IMR-90 (cell line): ENCODE measurements at regions of chr4 and their contacts with region 1.

Region 1: DNA sequence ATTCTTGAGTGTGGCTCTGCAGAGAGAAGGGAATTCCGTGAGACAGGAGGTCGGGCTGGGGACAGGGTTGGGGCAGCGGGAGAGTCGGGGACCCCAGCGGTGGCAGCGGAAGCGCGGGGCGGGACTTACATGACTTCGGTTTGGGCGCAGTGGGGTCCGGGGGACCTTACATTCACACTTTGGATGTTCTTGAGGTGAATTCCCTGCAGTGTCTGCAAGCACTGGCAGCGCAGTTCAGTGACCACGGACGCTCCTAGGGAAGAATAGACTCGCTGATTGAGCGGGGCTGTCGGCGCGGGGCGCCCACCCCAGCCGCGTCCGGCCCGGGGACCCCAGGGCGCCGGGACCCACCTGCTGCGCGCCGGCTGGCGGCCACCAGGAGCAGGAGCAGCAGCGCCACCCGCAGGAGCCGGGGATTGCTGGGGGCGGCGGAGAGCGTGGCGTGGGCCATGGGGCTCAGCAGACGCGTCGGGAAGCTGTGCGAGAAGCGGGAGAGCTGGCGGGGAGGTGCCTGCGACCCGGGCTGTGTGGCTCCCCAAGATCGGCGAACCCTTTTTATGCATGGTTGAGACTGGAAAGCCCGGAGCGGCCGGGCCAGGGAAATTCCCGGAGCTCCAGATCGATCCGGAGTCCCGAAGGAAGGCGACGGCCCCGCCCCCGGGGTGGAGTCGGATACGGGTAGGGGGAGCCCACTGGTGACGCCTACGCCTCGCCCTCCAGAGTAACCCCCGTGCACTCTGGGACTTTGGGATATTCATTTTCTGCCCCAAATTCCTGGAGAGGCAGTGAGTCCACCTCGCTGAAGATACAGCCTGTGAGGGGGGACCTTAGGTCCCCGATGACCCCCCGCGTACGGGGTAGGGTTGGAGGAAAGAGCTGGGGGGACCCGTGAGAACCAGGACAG is at the start of gene CXCL3:
- DNase-seq: peak; percentile 40
- ATAC-seq: peak; percentile 97
- H3K4me3 ChIP-seq: peak within 1 kb of the TSS; percentile 84
- H3K27ac ChIP-seq: peak within 1 kb of the TSS; percentile 53
- H3K4me1 ChIP-seq: peaks cover 2% of the 10 kb centered on the region; the same call in 1 of the 2 replicates
- H3K27me3 ChIP-seq: no peaks in the 10 kb centered on the region
- CTCF ChIP-seq: peak; percentile 48
- POLR2A ChIP-seq: 0 out of 2 replicates have a peak, but pooled peaks have one; percentile 20
- RAD21 ChIP-seq: peak; percentile 31
- total RNA-seq, gene CXCL3: 0.18 TPM in 1 of 2 replicates, not detected in the other

Region 2: DNA sequence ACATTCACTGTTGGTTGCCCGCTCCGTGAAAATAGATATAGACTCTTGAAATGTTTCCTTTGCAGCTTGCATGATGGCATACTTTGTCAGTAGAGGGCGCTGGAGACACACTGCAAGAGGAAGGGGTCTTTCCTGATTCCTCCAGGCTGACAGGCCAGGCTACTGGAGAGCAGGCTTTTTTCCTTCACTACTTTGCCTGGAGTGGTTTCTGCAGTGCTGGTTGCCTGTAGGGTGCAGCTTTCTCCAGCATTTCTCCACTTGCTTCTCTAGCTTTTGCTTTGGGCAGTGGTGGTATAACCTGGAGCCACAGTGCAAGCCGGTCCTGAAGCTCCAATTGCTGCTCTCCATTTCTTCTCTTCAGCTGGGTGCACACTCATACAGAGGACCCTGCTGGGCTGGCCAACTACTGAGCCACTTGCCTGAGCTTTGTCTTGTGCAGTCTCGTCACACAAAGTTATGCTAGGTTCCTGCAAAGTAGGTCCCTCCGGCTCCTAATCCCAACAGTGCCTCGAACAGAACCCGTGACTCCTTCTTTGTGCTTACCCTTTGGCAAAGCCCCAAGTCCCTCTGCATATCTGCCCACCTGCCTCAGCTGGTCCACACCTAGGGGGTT is 464.5 kb before region 1 on chr4:
- CTCF ChIA-PET with region 1: no interaction called
- POLR2A ChIA-PET with region 1: no interaction called
- dilution Hi-C with region 1: no loop called
- in situ Hi-C with region 1: no loop called
- intact Hi-C with region 1: loop called (anchors 10 kb)
- DNase-seq: peak; percentile 82
- ATAC-seq: peak; percentile 98
- H3K4me3 ChIP-seq: no peak overlapping the region
- H3K27ac ChIP-seq: no peak overlapping the region
- H3K4me1 ChIP-seq: no peaks in the 10 kb centered on the region
- H3K27me3 ChIP-seq: peaks cover 2% of the 10 kb centered on the region; the same call in 1 of the 2 replicates
- CTCF ChIP-seq: peak; percentile 88
- POLR2A ChIP-seq: no peak
- RAD21 ChIP-seq: peak; percentile 80

Region 3: GRCh38 chr4:73662709-73663546 is 375.5 kb before region 1 on chr4:
- CTCF ChIA-PET with region 1: interaction called, 3 read pairs
- POLR2A ChIA-PET with region 1: no interaction called
- dilution Hi-C with region 1: no loop called
- in situ Hi-C with region 1: loop called (anchors 10 kb)
- intact Hi-C with region 1: loop called (anchors 1 kb)
- DNase-seq: peak; percentile 77
- ATAC-seq: peak; percentile 64
- H3K4me3 ChIP-seq: no peak overlapping the region
- H3K27ac ChIP-seq: no peak overlapping the region; the same call in 1 of the 2 replicates
- H3K4me1 ChIP-seq: peaks cover 6% of the 10 kb centered on the region
- H3K27me3 ChIP-seq: no peaks in the 10 kb centered on the region
- CTCF ChIP-seq: peak; percentile 72
- POLR2A ChIP-seq: no peak
- RAD21 ChIP-seq: peak; percentile 87

Region 4: DNA sequence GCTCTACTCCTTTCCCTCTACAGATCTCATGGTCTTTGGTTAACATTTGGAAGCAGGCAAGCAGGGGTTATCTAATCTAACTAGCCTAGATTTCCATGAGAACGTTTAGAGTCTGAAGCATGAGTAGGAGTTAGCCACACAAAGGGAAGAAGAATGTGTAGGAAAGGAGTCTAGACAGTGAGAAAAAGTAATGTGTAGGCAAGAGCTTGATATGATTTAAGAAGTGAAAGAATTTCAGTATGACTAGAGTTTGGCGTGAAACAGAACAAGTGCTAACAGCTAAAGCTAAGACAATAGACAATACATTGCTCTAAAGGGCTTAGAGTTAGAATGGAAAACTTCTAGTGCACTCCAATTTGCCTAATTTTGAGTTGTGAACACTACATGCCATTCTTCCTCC is 287.2 kb before region 1 on chr4:
- CTCF ChIA-PET with region 1: no interaction called
- POLR2A ChIA-PET with region 1: no interaction called
- dilution Hi-C with region 1: no loop called
- in situ Hi-C with region 1: no loop called
- intact Hi-C with region 1: no loop called
- DNase-seq: no peak
- ATAC-seq: no peak
- H3K4me3 ChIP-seq: no peak overlapping the region
- H3K27ac ChIP-seq: no peak overlapping the region
- H3K4me1 ChIP-seq: no peaks in the 10 kb centered on the region
- H3K27me3 ChIP-seq: no peaks in the 10 kb centered on the region; the same call in 1 of the 2 replicates
- CTCF ChIP-seq: no peak
- POLR2A ChIP-seq: no peak
- RAD21 ChIP-seq: no peak

Region 5: DNA sequence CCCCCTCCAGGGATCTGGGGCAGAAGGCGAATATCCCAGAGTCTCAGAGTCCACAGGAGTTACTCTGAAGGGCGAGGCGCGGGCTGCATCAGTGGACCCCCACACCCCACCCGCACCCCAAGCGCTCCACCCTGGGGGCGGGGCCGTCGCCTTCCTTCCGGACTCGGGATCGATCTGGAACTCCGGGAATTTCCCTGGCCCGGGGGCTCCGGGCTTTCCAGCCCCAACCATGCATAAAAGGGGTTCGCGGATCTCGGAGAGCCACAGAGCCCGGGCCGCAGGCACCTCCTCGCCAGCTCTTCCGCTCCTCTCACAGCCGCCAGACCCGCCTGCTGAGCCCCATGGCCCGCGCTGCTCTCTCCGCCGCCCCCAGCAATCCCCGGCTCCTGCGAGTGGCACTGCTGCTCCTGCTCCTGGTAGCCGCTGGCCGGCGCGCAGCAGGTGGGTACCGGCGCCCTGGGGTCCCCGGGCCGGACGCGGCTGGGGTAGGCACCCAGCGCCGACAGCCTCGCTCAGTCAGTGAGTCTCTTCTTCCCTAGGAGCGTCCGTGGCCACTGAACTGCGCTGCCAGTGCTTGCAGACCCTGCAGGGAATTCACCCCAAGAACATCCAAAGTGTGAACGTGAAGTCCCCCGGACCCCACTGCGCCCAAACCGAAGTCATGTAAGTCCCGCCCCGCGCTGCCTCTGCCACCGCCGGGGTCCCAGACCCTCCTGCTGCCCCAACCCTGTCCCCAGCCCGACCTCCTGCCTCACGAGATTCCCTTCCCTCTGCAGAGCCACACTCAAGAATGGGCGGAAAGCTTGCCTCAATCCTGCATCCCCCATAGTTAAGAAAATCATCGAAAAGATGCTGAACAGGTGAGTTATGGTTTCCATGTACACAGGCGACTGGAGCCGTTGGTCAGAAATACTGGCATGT is 169.0 kb before region 1 on chr4 and contains the start of gene CXCL1:
- CTCF ChIA-PET with region 1: no interaction called
- POLR2A ChIA-PET with region 1: no interaction called
- dilution Hi-C with region 1: no loop called
- in situ Hi-C with region 1: no loop called
- intact Hi-C with region 1: loop called (anchors 10 kb)
- DNase-seq: no peak
- ATAC-seq: peak; percentile 87
- H3K4me3 ChIP-seq: peak within 1 kb of the TSS; percentile 55
- H3K27ac ChIP-seq: peak within 1 kb of the TSS; percentile 13; the same call in 1 of the 2 replicates
- H3K4me1 ChIP-seq: peaks cover 3% of the 10 kb centered on the region; the same call in 1 of the 2 replicates
- H3K27me3 ChIP-seq: peaks cover 51% of the 10 kb centered on the region
- CTCF ChIP-seq: 0 out of 2 replicates have a peak, but pooled peaks have one; percentile 10
- POLR2A ChIP-seq: no peak
- RAD21 ChIP-seq: 0 out of 2 replicates have a peak, but pooled peaks have one; percentile 11
- total RNA-seq, gene CXCL1: not detected in 2 replicates

Region 6: DNA sequence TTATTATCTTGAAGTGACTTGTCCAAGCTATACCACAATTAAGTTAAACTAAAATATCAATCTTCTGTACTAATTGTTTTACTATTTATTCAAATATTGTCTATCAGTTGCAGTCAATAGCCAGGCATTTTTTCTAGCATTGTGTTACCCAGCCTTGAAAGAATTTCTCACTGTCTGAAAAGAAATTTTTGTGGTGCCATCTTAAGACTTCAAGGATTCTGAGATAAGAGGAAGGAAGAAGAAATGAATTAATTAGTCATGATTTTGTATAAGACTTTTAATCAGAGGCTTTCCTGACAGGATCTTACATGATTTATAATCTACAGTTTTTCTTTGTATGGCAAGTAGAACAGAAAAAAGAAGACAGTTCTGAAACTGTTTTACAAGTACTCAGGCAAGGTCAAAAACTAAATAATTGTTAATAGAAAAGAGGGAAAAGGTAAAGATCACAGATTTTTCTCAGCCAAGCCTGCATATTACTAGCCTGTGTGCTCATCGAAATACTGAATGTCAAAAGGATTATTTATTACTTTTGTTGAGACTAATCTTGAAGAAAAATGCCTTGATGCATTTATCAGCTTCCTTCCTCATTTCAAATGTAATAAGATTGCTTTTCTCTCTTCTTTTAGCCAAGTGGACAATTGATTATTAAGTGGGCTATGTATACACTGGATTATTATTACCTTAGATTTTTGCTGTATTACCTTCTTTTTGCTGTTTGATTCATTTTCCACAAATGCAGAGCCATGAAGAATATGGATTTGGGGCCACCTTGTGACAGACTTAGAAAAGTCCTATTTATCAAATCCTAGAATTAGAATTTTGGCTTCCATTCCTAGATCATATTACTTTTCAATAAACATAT is 115.4 kb before region 1 on chr4:
- CTCF ChIA-PET with region 1: no interaction called
- POLR2A ChIA-PET with region 1: no interaction called
- dilution Hi-C with region 1: no loop called
- in situ Hi-C with region 1: no loop called
- intact Hi-C with region 1: loop called (anchors 10 kb)
- DNase-seq: peak; percentile 59
- ATAC-seq: no peak; the same call in 1 of the 2 replicates
- H3K4me3 ChIP-seq: no peak overlapping the region
- H3K27ac ChIP-seq: no peak overlapping the region
- H3K4me1 ChIP-seq: peaks cover 6% of the 10 kb centered on the region
- H3K27me3 ChIP-seq: peaks cover 8% of the 10 kb centered on the region
- CTCF ChIP-seq: peak; percentile 61
- POLR2A ChIP-seq: no peak
- RAD21 ChIP-seq: peak; percentile 76

Region 7: DNA sequence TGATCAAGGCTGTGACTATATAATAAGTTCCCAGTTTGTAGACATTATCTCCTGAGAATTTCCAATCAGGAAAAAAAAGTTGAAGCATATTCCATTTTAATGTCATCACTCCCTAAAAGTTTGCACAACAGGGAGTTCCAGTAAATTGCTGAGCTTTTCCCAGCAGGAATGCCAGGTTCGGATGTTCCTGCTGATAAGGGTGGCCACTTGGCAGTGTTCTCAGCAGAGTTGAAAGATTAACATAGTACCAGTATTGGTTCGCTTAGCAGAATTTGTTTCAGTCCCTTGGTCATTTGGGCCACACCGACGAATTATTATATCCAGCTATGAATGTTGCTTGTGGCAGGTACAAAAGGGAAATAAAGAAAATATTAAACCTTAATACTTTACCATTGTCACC is 65.7 kb after region 1 on chr4:
- CTCF ChIA-PET with region 1: no interaction called
- POLR2A ChIA-PET with region 1: no interaction called
- dilution Hi-C with region 1: no loop called
- in situ Hi-C with region 1: no loop called
- intact Hi-C with region 1: loop called (anchors 5 kb)
- DNase-seq: no peak
- ATAC-seq: no peak
- H3K4me3 ChIP-seq: no peak overlapping the region
- H3K27ac ChIP-seq: no peak overlapping the region
- H3K4me1 ChIP-seq: peaks cover 4% of the 10 kb centered on the region
- H3K27me3 ChIP-seq: no peaks in the 10 kb centered on the region
- CTCF ChIP-seq: no peak
- POLR2A ChIP-seq: no peak
- RAD21 ChIP-seq: no peak

Region 8: GRCh38 chr4:74244049-74244448 is 205.6 kb after region 1 on chr4:
- CTCF ChIA-PET with region 1: no interaction called
- POLR2A ChIA-PET with region 1: no interaction called
- dilution Hi-C with region 1: no loop called
- in situ Hi-C with region 1: no loop called
- intact Hi-C with region 1: no loop called
- DNase-seq: no peak
- ATAC-seq: no peak
- H3K4me3 ChIP-seq: no peak overlapping the region
- H3K27ac ChIP-seq: no peak overlapping the region
- H3K4me1 ChIP-seq: no peaks in the 10 kb centered on the region
- H3K27me3 ChIP-seq: no peaks in the 10 kb centered on the region
- CTCF ChIP-seq: no peak
- POLR2A ChIP-seq: no peak
- RAD21 ChIP-seq: no peak

Region 9: DNA sequence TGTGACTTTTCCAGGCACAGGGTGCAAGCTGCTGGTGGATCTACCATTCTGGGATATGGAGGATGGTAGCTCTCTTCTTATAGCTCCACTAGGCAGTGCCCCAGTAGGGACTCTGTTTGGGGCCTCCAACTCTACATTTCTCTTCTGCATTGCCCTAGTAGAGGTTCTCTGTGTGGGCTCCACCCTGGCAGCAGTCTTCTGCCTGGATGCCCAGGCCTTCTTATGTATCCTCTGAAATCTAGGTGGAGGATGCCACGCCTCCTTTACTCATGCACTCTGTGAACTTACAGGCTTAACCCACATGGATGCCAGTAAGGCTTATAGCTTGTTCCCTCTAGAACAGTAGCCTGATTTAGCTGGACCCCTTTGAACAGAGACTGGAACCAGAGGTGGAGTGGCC is 305.6 kb after region 1 on chr4:
- CTCF ChIA-PET with region 1: no interaction called
- POLR2A ChIA-PET with region 1: no interaction called
- dilution Hi-C with region 1: no loop called
- in situ Hi-C with region 1: no loop called
- intact Hi-C with region 1: no loop called
- DNase-seq: no peak
- ATAC-seq: no peak
- H3K4me3 ChIP-seq: no peak overlapping the region
- H3K27ac ChIP-seq: no peak overlapping the region
- H3K4me1 ChIP-seq: no peaks in the 10 kb centered on the region
- H3K27me3 ChIP-seq: peaks cover 3% of the 10 kb centered on the region
- CTCF ChIP-seq: no peak
- POLR2A ChIP-seq: no peak
- RAD21 ChIP-seq: no peak